Psoas muscle (tissue), 8 donors: ENCODE measurements at regions of chr2 and their contacts with region 1.

Region 1: GRCh38 chr2:233251306-233252116 is at the start of gene ATG16L1:
- DNase-seq: peak; percentile 96 to 98
- ATAC-seq: peak; percentile 99 to 100 (median 100)
- H3K4me3 ChIP-seq: peak within 1 kb of the TSS; percentile 87
- H3K27ac ChIP-seq: peak within 1 kb of the TSS; percentile 87
- H3K4me1 ChIP-seq: peaks cover 17% of the 10 kb centered on the region
- H3K27me3 ChIP-seq: no peaks in the 10 kb centered on the region
- CTCF ChIP-seq: peak; percentile 92
- total RNA-seq, gene ATG16L1: 14.3 to 26.3 (median 22.1) TPM

Region 2: GRCh38 chr2:232611551-232612218 is 639.8 kb before region 1 on chr2:
- intact Hi-C with region 1: loop called (anchors 2 to 5 kb)
- DNase-seq: peak; percentile 74 to 81
- ATAC-seq: peak; percentile 55 to 81 (median 75)
- H3K4me3 ChIP-seq: no peak overlapping the region
- H3K27ac ChIP-seq: no peak overlapping the region
- H3K4me1 ChIP-seq: no peaks in the 10 kb centered on the region
- H3K27me3 ChIP-seq: no peaks in the 10 kb centered on the region
- CTCF ChIP-seq: peak; percentile 72

Region 3: GRCh38 chr2:232809349-232810124 is 442.0 kb before region 1 on chr2:
- intact Hi-C with region 1: loop called in 1 of 2 experiments (anchors 5 kb)
- DNase-seq: peak in 1 of 2 donors; percentile 60
- ATAC-seq: peak; percentile 76 to 96 (median 94)
- H3K4me3 ChIP-seq: no peak overlapping the region
- H3K27ac ChIP-seq: peak overlapping the region; percentile 59
- H3K4me1 ChIP-seq: peaks cover 8% of the 10 kb centered on the region
- H3K27me3 ChIP-seq: no peaks in the 10 kb centered on the region
- CTCF ChIP-seq: peak; percentile 8

Region 4: GRCh38 chr2:232839411-232840079 is 412.0 kb before region 1 on chr2:
- intact Hi-C with region 1: loop called in 1 of 2 experiments (anchors 10 kb)
- DNase-seq: peak in 1 of 2 donors; percentile 64
- ATAC-seq: peak in 1 of 4 donors; percentile 46
- H3K4me3 ChIP-seq: no peak overlapping the region
- H3K27ac ChIP-seq: no peak overlapping the region
- H3K4me1 ChIP-seq: peaks cover 23% of the 10 kb centered on the region
- H3K27me3 ChIP-seq: no peaks in the 10 kb centered on the region
- CTCF ChIP-seq: no peak

Region 5: DNA sequence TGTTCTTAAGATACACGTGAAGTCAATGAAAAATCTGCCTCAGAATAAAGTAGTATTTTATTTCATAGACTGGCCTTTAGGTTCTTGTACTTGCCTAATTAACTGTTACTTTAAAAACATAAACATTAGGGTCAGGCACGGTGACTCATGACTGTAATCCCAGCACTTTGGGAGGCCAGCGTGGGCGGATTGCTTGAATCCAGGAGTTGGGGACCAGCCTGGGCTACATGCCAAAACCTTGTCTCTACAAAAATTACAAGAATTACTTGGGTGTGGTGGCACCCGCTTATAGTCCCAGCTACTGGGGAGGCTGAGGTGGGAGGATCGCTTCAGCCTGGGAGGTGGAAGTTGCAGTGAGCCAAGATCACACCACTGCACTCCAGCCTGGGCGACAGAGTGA is 397.4 kb before region 1 on chr2:
- intact Hi-C with region 1: loop called (anchors 1 to 10 kb)
- DNase-seq: no peak
- ATAC-seq: no peak
- H3K4me3 ChIP-seq: no peak overlapping the region
- H3K27ac ChIP-seq: peak overlapping the region; percentile 80
- H3K4me1 ChIP-seq: peaks cover 45% of the 10 kb centered on the region
- H3K27me3 ChIP-seq: no peaks in the 10 kb centered on the region
- CTCF ChIP-seq: no peak

Region 6: DNA sequence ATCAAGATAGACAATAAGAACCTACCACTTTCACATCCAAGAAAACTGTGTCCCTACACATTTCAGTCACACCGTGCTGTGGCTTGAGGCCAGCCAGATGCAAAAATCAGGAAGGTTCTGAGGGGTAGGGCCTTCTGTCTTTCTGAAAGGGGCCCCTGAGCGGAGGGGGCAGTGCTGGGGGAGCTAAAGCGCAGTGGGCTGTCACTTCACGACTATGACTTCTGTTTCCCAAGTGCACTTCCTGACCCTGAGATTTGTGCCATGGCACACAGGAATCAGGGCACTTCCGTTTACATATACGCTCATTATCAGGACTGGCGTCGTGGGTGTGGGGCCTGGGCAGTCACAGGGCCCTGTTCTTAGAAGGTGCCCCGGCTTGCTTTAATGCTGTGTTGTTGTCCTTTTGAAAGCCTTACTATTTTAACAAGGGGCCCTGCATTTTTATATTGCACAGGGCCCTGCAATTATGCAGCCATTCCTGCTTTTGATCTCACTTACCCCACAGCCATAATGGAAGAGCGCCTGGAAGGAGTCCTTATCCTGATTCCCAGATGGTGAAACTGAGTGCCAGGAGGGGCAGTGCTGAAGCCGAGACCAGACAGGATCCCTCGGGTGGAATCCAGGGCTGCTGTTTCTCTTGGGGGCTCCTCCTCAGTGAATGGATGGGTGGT is 239.1 kb before region 1 on chr2:
- intact Hi-C with region 1: no loop called
- DNase-seq: no peak
- ATAC-seq: no peak
- H3K4me3 ChIP-seq: no peak overlapping the region
- H3K27ac ChIP-seq: no peak overlapping the region
- H3K4me1 ChIP-seq: no peaks in the 10 kb centered on the region
- H3K27me3 ChIP-seq: no peaks in the 10 kb centered on the region
- CTCF ChIP-seq: no peak

Region 7: DNA sequence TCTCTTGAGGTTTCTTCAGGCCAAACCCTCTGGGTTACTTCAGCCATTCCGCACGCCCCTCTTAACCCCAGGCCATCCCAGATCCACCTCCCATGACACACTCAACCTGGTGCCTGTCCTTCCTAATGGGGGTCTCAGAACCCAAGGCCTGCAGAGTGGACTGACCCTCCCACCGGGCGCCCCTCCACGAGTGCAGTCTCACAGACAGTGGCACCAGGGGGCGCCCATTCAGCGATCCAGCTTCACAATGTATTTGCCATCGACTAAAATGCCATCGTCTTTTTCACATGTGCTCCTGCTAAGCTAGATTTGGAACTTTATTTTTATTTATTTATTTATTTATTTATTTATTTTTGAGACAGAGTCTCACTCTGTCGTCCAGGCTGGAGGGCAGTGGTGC is 152.9 kb before region 1 on chr2:
- intact Hi-C with region 1: loop called in 1 of 2 experiments (anchors 5 kb)
- DNase-seq: no peak
- ATAC-seq: peak in 1 of 4 donors; percentile 40
- H3K4me3 ChIP-seq: no peak overlapping the region
- H3K27ac ChIP-seq: no peak overlapping the region
- H3K4me1 ChIP-seq: no peaks in the 10 kb centered on the region
- H3K27me3 ChIP-seq: no peaks in the 10 kb centered on the region
- CTCF ChIP-seq: peak; percentile 14